Uterus (tissue), 4 donors: ENCODE measurements at regions of chr19 and their contacts with region 1.

Region 1: GRCh38 chr19:23321948-23322549 is 71.9 kb upstream of the ZNF724 start:
- DNase-seq: no peak
- H3K4me3 ChIP-seq: no peak overlapping the region
- H3K27ac ChIP-seq: no peak overlapping the region
- H3K4me1 ChIP-seq: no peaks in the 10 kb centered on the region
- H3K27me3 ChIP-seq: no peaks in the 10 kb centered on the region
- CTCF ChIP-seq: no peak
- POLR2A ChIP-seq: no peak

Region 2: GRCh38 chr19:23470873-23471545 is 149.0 kb after region 1 on chr19:
- intact Hi-C with region 1: loop called (anchors 2 kb)
- DNase-seq: no peak
- H3K4me3 ChIP-seq: no peak overlapping the region
- H3K27ac ChIP-seq: no peak overlapping the region
- H3K4me1 ChIP-seq: no peaks in the 10 kb centered on the region
- H3K27me3 ChIP-seq: no peaks in the 10 kb centered on the region
- CTCF ChIP-seq: no peak
- POLR2A ChIP-seq: no peak